Ascending aorta (tissue), 2 donors: ENCODE measurements at regions of chr4 and their contacts with region 1.

Region 1: DNA sequence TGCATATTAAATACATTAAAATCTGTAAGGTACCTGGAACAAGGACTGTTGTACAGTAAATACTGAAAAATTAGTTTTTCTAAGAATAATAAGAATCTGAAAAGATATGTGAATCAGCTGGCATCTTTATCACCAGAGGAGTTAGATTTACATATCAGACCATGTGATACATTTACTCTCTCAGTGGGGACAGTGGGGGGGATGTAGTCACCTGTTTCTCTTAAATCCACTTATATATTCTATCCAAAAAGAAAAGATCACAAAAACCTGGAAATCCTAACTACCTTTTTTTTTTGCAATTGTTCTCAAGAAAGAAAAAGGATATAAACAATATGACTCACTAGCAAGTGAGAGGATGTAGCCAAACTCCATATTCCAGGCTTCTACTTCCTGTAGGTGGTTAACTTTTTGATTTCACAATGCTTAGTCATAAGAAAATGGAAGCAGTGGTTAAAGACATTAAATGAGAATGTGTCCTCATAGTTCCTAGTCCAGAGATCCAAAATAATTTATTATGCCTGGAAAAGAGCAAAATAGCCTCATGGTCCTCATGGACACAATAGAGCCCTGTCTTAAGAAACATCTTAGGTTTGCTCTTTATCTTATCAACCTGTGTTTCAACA is 22.5 kb upstream of the MYOZ2 start:
- DNase-seq: no peak
- H3K4me3 ChIP-seq: no peak overlapping the region
- H3K27ac ChIP-seq: peak overlapping the region in 1 of 2 donors; percentile 35
- H3K4me1 ChIP-seq: peaks cover 0 to 8% of the 10 kb centered on the region in 2 donors
- H3K27me3 ChIP-seq: no peaks in the 10 kb centered on the region
- CTCF ChIP-seq: no peak

Region 2: GRCh38 chr4:118881512-118882146 is 231.5 kb before region 1 on chr4:
- intact Hi-C with region 1: no loop called
- DNase-seq: no peak
- H3K4me3 ChIP-seq: no peak overlapping the region
- H3K27ac ChIP-seq: no peak overlapping the region
- H3K4me1 ChIP-seq: no peaks in the 10 kb centered on the region
- H3K27me3 ChIP-seq: no peaks in the 10 kb centered on the region
- CTCF ChIP-seq: no peak

Region 3: GRCh38 chr4:119130365-119131065 is 17.4 kb after region 1 on chr4:
- intact Hi-C with region 1: loop called (anchors 2 kb)
- DNase-seq: no peak
- H3K4me3 ChIP-seq: no peak overlapping the region
- H3K27ac ChIP-seq: peak overlapping the region; percentile 72 to 85
- H3K4me1 ChIP-seq: peaks cover 6 to 33% of the 10 kb centered on the region in 2 donors
- H3K27me3 ChIP-seq: no peaks in the 10 kb centered on the region
- CTCF ChIP-seq: no peak